OCI-LY7 (cell line): ENCODE measurements at regions of chr11 and their contacts with region 1.

Region 1: GRCh38 chr11:10540923-10541560 is at the start of gene RNF141:
- DNase-seq: peak; percentile 93
- H3K4me3 ChIP-seq: peak within 1 kb of the TSS; percentile 81
- H3K27ac ChIP-seq: no peak within 1 kb of the TSS
- H3K4me1 ChIP-seq: peaks cover 7% of the 10 kb centered on the region
- CTCF ChIP-seq: peak; percentile 78
- total RNA-seq, gene RNF141: 8.2 and 9.2 TPM in 2 replicates

Region 2: GRCh38 chr11:10413268-10413667 is 127.8 kb before region 1 on chr11:
- CTCF ChIA-PET with region 1: no interaction called
- POLR2A ChIA-PET with region 1: interaction called, 3 read pairs
- intact Hi-C with region 1: loop called (anchors 10 kb)
- DNase-seq: peak; percentile 69
- H3K4me3 ChIP-seq: no peak overlapping the region
- H3K27ac ChIP-seq: no peak overlapping the region
- H3K4me1 ChIP-seq: peaks cover 4% of the 10 kb centered on the region
- CTCF ChIP-seq: peak; percentile 79

Region 3: DNA sequence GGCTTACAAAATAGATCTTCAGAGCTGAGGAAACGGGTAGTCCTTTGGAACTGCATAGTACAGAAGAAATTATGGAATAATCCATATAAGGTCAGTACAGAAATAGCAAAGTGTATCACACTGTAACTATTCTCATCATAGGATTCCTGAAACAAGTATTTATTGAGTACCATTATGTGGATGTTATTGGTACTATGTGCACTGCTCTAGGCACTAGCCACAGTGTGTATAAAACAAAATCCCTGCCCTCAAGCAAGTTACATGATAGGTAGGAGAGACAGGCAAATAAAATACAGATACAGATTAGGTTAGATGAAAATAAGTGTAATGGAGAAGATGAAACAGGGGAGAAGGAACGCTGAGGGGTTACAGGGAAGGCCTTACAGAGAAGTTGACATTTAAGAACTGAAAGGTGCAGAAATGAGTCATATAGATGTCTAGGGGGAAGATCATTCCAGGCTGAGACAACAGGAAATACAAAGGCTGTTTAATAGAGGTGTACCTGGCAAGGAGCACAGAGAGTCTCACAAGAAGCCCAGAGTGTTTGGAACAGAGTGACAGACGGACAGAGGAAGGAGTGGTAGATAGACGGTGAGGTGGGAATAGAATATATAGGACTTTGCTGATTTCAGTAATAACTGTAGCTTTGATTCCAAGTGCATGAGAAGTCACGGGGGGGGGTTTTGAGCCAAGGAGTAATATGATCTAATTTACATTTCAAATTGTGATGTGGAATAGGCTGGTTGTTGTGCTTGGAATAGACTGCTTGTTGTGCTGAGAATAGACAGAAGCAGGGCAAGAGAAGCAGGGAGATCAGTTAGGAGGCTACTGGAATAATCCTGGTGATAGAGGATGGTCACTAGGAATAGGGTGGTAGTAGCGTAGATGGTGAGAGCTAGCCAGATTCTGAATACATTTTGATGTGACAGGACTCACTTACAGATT is 13.8 kb before region 1 on chr11:
- CTCF ChIA-PET with region 1: interaction called, 7 read pairs
- POLR2A ChIA-PET with region 1: interaction called, 13 read pairs
- intact Hi-C with region 1: no loop called
- DNase-seq: no peak
- H3K4me3 ChIP-seq: no peak overlapping the region
- H3K27ac ChIP-seq: no peak overlapping the region
- H3K4me1 ChIP-seq: no peaks in the 10 kb centered on the region
- CTCF ChIP-seq: no peak

Region 4: GRCh38 chr11:10735481-10736475 is 194.7 kb after region 1 on chr11:
- CTCF ChIA-PET with region 1: no interaction called
- POLR2A ChIA-PET with region 1: no interaction called
- intact Hi-C with region 1: loop called (anchors 10 kb)
- DNase-seq: peak; percentile 80
- H3K4me3 ChIP-seq: no peak overlapping the region
- H3K27ac ChIP-seq: no peak overlapping the region
- H3K4me1 ChIP-seq: peaks cover 4% of the 10 kb centered on the region
- CTCF ChIP-seq: peak; percentile 92